Posterior cingulate gyrus (tissue), 11 donors: ENCODE measurements at regions of chr2 and their contacts with region 1.

Region 1: DNA sequence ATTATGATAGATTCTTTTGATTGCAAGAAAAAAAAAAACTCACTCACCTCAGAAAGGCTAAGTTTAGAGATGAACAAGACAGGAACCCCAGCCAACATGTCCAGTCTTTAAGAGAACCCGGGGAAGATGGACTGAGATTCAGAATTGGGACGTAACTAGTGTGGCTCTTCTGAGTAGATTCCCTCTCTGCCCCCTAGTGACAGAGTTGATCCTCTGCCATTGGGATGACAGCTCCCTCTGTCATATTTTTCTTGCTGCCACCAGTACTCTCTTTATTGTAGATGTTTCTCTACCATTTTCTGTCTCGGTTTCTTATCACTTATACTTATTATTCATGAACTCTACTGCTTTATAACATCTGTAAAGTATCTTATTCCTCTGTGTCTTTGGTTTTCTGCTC is 77.7 kb downstream of the GULP1 start:
- DNase-seq: peak in 1 of 10 donors; percentile 43

Region 2: DNA sequence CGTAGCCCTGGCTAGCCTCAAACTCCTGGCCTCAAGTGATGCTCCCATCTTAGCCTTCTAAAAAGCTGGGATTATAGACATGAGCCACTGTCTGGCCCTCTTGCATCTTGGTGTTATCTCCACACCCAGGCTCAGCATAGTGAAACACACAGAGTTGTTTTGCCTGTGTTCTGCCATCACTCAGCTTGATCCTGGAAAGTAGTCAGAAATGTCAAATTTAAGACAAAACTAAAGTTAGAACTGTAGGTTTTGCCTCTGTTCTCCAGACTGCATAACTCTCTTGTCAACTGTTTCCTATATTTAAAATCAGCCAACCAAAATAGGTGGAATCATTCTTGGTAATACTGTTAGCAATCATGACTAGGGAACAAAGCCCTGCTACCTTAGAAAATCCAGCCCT is 149.8 kb before region 1 on chr2:
- intact Hi-C with region 1: no loop called
- DNase-seq: no peak

Region 3: GRCh38 chr2:188291617-188292347 is 77.6 kb before region 1 on chr2 and contains the start of gene GULP1:
- intact Hi-C with region 1: loop called (anchors 5 kb)
- DNase-seq: peak; percentile 57 to 94 (median 70)

Region 4: DNA sequence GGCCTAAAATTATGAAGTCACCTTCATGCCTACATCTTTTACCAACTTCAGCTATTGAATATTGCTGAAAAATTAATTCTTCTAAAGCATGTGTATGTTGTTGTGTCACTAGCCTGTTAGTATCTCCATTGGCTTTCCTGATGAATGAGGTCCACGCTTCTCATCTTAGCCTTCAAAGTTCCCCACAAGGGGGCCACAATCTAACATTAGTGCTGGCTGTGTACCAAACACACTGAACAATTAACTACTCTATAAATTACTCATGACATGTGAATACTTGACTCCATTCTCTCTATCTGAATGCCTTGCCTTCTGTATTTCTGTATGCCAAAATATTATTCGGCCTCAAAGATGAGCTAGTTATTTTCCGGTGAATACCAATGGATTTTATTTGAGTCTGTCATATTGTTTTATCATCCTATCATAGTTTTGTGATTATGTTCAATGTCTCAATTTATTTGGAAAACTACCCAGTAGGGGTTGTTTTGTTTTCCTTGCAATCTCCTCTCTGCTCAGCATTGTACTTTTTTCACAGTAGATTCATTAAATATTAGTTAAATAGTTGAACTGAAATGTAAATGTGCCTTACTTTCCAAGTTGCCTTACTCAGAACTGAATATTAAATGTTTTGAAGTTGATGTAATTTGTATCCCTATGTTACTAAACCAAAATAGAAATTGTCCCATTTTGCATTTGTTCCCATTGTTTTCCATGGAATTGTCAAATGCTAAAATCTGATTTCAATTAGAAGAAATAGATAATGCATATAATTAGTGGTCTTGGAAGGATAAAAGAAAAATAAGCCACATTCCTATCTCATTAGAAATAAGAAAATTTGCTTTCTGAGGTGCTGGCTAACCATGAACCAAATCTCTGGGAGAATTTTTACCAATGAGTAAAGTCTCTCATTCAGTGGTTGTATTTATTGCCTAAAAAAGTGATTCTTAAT is 396.4 kb after region 1 on chr2:
- intact Hi-C with region 1: no loop called
- DNase-seq: no peak